IMR-90 (cell line): ENCODE measurements at regions of chr3 and their contacts with region 1.

Region 1: DNA sequence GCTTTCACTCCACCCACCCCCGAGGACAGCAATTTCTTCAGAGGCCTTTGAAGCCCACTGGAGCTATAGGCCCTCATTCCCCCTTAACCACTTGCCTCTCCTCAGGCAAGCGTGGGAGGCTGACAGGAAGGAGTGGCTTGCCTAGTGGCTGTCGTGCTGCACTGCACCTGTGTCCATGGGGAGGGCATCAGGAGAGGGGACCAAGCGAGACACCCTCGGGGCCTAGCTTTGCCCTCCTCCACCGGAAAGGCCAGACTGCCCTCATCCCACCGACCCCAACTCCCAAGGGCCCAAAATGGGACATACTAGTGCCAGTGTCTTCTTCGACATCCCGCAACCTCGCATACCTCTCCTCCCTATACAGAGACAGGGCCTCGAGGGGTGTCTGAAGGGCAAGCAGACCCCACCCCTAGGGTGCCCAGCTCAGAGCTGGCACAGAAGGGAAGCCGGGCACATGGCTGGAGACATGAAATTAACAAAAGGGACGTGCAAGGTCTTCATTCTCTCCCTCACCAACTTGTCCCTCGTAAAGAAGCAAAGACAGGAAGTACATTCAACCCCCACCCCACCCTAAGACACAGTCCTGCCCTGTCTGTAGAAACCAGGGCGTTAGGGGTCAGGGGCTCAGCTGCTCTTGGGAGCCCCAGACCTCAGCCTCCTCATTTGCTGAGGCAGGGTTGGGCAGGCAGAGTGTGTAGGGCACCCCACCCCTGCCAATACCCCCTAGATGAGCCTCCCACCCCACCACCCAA is 24.3 kb downstream of the VIPR1 start:
- DNase-seq: no peak
- ATAC-seq: no peak
- H3K4me3 ChIP-seq: no peak overlapping the region
- H3K27ac ChIP-seq: no peak overlapping the region
- H3K4me1 ChIP-seq: no peaks in the 10 kb centered on the region
- H3K27me3 ChIP-seq: peaks cover 2% of the 10 kb centered on the region; the same call in 1 of the 2 replicates
- CTCF ChIP-seq: no peak
- POLR2A ChIP-seq: no peak
- RAD21 ChIP-seq: no peak

Region 2: GRCh38 chr3:42515391-42515916 is 11.3 kb before region 1 on chr3:
- CTCF ChIA-PET with region 1: no interaction called
- POLR2A ChIA-PET with region 1: no interaction called
- dilution Hi-C with region 1: no loop called
- in situ Hi-C with region 1: no loop called
- intact Hi-C with region 1: loop called (anchors 1 kb)
- DNase-seq: no peak
- ATAC-seq: no peak
- H3K4me3 ChIP-seq: no peak overlapping the region
- H3K27ac ChIP-seq: no peak overlapping the region
- H3K4me1 ChIP-seq: no peaks in the 10 kb centered on the region
- H3K27me3 ChIP-seq: peaks cover 10% of the 10 kb centered on the region
- CTCF ChIP-seq: no peak
- POLR2A ChIP-seq: no peak
- RAD21 ChIP-seq: no peak